GM12878 (cell line): ENCODE measurements at regions of chr11 and their contacts with region 1.

Region 1: GRCh38 chr11:65766535-65766934 is 14.2 kb downstream of the AP5B1 start:
- DNase-seq: no peak
- ATAC-seq: no peak; the same call in 2 of the 3 replicates
- H3K4me3 ChIP-seq: no peak overlapping the region
- H3K27ac ChIP-seq: no peak overlapping the region
- H3K4me1 ChIP-seq: no peaks in the 10 kb centered on the region
- H3K27me3 ChIP-seq: no peaks in the 10 kb centered on the region
- CTCF ChIP-seq: no peak
- EP300 ChIP-seq: no peak
- POLR2A ChIP-seq: no peak
- RAD21 ChIP-seq: no peak

Region 2: GRCh38 chr11:65625628-65626342 is 140.8 kb before region 1 on chr11:
- CTCF ChIA-PET with region 1: interaction called, 24 read pairs
- POLR2A ChIA-PET with region 1: no interaction called
- RAD21 ChIA-PET with region 1: interaction called, 6 read pairs
- SMC1A ChIA-PET with region 1: interaction called, 4 read pairs
- in situ Hi-C with region 1: no loop called
- intact Hi-C with region 1: no loop called
- DNase-seq: no peak
- ATAC-seq: peak; percentile 96
- H3K4me3 ChIP-seq: no peak overlapping the region
- H3K27ac ChIP-seq: no peak overlapping the region
- H3K4me1 ChIP-seq: no peaks in the 10 kb centered on the region
- H3K27me3 ChIP-seq: no peaks in the 10 kb centered on the region
- CTCF ChIP-seq: peak; percentile 60 to 87 (median 85)
- EP300 ChIP-seq: no peak
- POLR2A ChIP-seq: no peak
- RAD21 ChIP-seq: peak; percentile 39

Region 3: GRCh38 chr11:65658174-65659021 is 108.1 kb before region 1 on chr11:
- CTCF ChIA-PET with region 1: no interaction called
- POLR2A ChIA-PET with region 1: no interaction called
- RAD21 ChIA-PET with region 1: no interaction called
- SMC1A ChIA-PET with region 1: no interaction called
- in situ Hi-C with region 1: no loop called
- intact Hi-C with region 1: no loop called
- DNase-seq: no peak
- ATAC-seq: no peak
- H3K4me3 ChIP-seq: no peak overlapping the region
- H3K27ac ChIP-seq: no peak overlapping the region
- H3K4me1 ChIP-seq: peaks cover 15% of the 10 kb centered on the region
- H3K27me3 ChIP-seq: no peaks in the 10 kb centered on the region
- CTCF ChIP-seq: no peak
- EP300 ChIP-seq: no peak
- POLR2A ChIP-seq: peak; percentile 46; the same call in 1 of the 2 replicates
- RAD21 ChIP-seq: no peak

Region 4: DNA sequence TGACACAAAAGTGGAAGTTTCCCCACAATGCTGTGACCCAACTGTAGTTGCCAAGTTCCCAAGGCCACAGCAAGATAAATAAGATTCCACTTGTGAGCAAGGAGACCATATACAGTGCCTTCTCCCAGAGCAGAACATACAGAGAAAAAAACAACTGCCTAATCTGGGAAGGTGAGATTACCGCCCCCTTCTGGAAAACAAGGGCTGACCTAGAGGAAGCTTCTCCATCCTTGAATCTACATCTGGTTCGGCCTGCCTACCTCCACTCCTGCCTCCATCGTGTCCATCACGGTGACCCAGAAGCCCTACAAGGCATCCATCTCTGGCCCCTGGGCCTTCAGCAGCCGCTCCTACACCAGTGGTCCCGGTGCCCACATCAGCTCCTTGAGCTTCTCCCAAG is 39.9 kb before region 1 on chr11:
- CTCF ChIA-PET with region 1: interaction called, 9 read pairs
- POLR2A ChIA-PET with region 1: no interaction called
- RAD21 ChIA-PET with region 1: no interaction called
- SMC1A ChIA-PET with region 1: no interaction called
- in situ Hi-C with region 1: no loop called
- intact Hi-C with region 1: loop called (anchors 5 kb)
- DNase-seq: no peak
- ATAC-seq: peak; percentile 26; the same call in 1 of the 3 replicates
- H3K4me3 ChIP-seq: no peak overlapping the region
- H3K27ac ChIP-seq: no peak overlapping the region
- H3K4me1 ChIP-seq: no peaks in the 10 kb centered on the region
- H3K27me3 ChIP-seq: no peaks in the 10 kb centered on the region; a peak in 1 of 4 replicates
- CTCF ChIP-seq: peak; percentile 7 to 25 (median 21); a peak in 2 of 6 replicates
- EP300 ChIP-seq: no peak
- POLR2A ChIP-seq: no peak
- RAD21 ChIP-seq: no peak

Region 5: DNA sequence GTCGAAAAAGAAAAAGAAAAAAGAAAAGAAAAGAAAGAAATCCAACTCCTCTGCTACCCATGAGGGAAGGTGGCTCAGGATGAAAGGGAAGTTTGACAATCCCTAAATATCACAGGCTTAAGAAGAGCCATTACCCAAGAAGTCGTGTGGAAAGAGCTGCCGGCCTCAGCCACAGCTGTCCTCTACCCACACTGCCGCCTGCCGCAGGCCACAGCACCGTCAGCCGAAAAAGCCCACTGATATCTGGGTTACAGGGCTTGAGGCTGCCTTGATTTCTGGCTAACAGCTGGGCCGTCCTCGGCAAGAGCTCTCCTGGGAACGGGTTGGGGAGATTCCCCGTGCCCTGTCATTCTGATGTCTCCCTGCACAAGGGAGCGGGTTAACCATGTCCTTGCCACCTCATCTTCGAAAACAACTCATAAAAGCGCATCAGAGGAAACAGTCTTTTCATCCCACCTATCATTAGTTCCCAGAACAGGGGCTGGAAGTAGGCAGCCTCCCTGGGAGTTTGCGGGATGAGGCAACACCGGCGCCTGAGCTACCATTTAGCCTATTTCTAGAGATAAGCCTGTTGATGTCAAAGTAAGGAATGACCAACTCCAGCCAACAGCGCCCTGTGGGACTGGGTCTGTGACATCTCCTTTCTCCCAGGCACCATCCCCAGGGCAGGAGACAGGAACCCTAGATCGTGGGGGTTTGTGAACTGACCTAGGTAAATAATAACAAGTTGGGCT is 45.4 kb after region 1 on chr11:
- CTCF ChIA-PET with region 1: interaction called, 32 read pairs
- POLR2A ChIA-PET with region 1: no interaction called
- RAD21 ChIA-PET with region 1: interaction called, 3 read pairs
- SMC1A ChIA-PET with region 1: interaction called, 5 read pairs
- in situ Hi-C with region 1: no loop called
- intact Hi-C with region 1: no loop called
- DNase-seq: no peak
- ATAC-seq: peak; percentile 28; the same call in 1 of the 3 replicates
- H3K4me3 ChIP-seq: no peak overlapping the region
- H3K27ac ChIP-seq: no peak overlapping the region
- H3K4me1 ChIP-seq: no peaks in the 10 kb centered on the region; the same call in 1 of the 2 replicates
- H3K27me3 ChIP-seq: no peaks in the 10 kb centered on the region; a peak in 1 of 4 replicates
- CTCF ChIP-seq: no peak
- EP300 ChIP-seq: no peak
- POLR2A ChIP-seq: no peak
- RAD21 ChIP-seq: no peak